Activated CD4-positive, alpha-beta T cell treated with anti-CD3 and anti-CD28 coated beads for 36 hours (primary cell): ENCODE measurements at regions of chr16 and their contacts with region 1.

Region 1: GRCh38 chr16:2905431-2906387 is 6.0 kb upstream of the FLYWCH1 start:
- DNase-seq: peak; percentile 100
- ATAC-seq: peak; percentile 81
- H3K4me3 Mint-ChIP-seq: peak overlapping the region; percentile 94
- H3K27ac Mint-ChIP-seq: peak overlapping the region; percentile 8
- H3K4me1 Mint-ChIP-seq: peaks cover 19% of the 10 kb centered on the region
- H3K27me3 Mint-ChIP-seq: no peaks in the 10 kb centered on the region

Region 2: DNA sequence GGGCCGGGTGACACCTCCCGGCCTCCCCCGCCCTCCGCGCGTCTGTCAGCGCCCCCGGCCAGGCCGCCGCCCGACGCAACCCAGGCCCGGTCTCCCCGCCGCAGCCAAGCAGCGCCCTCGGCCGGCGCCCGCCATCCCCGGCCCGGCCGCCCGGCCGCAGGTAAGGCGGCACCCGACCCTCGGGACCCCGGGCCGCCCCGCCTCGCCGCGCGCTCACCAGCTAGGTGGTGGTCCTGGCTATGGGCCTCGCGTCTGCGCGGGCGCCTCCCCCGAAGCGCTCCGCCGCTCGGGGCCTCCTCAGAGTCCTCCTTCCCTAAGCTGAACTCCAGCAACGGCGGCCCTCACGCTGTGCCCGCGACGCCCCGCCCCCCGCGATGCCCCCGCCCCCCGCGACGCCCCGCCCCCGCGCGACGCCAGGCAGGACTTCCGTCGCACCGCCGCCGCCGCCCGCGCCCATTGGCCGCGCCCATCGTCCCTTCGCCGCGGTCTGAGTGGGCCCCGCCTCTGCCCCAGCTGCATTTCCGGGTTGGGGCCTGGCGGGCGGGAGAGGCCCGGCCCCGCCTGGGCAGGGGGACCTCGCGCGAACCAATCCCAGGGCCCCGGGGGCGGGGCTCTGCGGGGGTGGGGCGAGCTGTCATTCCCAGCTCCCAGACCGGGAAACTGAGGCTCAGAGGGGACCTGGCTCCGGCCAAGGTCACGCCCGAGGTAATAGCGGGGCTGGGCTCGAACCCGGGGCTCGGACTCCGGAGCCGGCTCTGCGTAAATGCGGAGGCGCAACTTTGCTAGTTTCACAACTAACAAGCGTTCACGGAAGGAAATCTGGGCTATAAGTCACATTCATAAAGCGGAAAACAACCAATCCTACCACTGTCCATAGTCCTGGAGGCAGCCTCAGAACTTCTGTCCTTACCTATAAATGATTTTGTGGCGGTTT is 232.4 kb before region 1 on chr16:
- CTCF ChIA-PET with region 1: no interaction called
- POLR2A ChIA-PET with region 1: no interaction called
- intact Hi-C with region 1: loop called in 1 of 2 experiments (anchors 1 kb)
- DNase-seq: peak; percentile 98
- ATAC-seq: peak; percentile 97
- H3K4me3 Mint-ChIP-seq: peak overlapping the region; percentile 73
- H3K27ac Mint-ChIP-seq: peak overlapping the region; percentile 47
- H3K4me1 Mint-ChIP-seq: peaks cover 28% of the 10 kb centered on the region
- H3K27me3 Mint-ChIP-seq: no peaks in the 10 kb centered on the region

Region 3: GRCh38 chr16:2838928-2839327 is 66.8 kb before region 1 on chr16:
- CTCF ChIA-PET with region 1: interaction called, 4 read pairs
- POLR2A ChIA-PET with region 1: no interaction called
- intact Hi-C with region 1: loop called in 1 of 2 experiments (anchors 2 kb)
- DNase-seq: peak; percentile 77
- ATAC-seq: peak; percentile 67
- H3K4me3 Mint-ChIP-seq: no peak overlapping the region
- H3K27ac Mint-ChIP-seq: no peak overlapping the region
- H3K4me1 Mint-ChIP-seq: peaks cover 31% of the 10 kb centered on the region
- H3K27me3 Mint-ChIP-seq: peaks cover 3% of the 10 kb centered on the region

Region 4: DNA sequence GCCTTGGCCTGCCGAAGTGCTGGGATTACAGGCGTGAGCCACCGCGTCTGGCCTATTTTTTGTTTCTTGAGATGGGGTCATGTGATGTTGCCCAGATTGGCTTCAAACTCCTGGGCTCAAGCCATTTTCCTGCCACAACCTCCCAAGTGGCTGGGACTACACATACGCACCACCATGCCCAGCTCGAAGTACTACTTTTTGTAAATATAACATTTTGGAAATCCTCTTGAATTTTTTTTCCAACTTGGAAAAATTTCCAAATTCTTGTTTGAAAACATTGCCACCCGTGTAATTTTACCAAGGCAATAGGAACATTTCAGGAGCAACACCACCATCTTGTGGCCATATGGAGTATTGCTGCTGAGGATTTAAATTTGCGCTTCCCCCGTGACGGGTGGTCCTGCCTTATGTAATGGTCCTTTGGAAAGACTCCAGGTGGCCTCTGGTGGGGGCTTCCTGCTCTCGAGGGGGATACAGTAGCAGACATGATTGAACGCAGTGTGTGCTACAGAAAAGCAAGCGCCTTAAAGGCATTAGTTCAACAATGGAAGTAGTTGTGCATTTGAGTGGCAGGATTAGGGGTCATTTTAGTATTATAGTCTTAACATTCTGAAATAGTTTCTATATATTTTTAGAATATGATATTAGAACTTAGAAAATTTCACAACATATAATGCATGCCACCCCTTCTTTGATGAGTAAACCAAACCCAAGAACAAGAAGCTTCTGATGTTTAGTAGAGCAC is 14.0 kb after region 1 on chr16:
- CTCF ChIA-PET with region 1: interaction called, 8 read pairs
- POLR2A ChIA-PET with region 1: no interaction called
- intact Hi-C with region 1: loop called (anchors 1 kb)
- DNase-seq: peak; percentile 72
- ATAC-seq: peak; percentile 60
- H3K4me3 Mint-ChIP-seq: no peak overlapping the region
- H3K27ac Mint-ChIP-seq: no peak overlapping the region
- H3K4me1 Mint-ChIP-seq: peaks cover 18% of the 10 kb centered on the region
- H3K27me3 Mint-ChIP-seq: no peaks in the 10 kb centered on the region

Region 5: DNA sequence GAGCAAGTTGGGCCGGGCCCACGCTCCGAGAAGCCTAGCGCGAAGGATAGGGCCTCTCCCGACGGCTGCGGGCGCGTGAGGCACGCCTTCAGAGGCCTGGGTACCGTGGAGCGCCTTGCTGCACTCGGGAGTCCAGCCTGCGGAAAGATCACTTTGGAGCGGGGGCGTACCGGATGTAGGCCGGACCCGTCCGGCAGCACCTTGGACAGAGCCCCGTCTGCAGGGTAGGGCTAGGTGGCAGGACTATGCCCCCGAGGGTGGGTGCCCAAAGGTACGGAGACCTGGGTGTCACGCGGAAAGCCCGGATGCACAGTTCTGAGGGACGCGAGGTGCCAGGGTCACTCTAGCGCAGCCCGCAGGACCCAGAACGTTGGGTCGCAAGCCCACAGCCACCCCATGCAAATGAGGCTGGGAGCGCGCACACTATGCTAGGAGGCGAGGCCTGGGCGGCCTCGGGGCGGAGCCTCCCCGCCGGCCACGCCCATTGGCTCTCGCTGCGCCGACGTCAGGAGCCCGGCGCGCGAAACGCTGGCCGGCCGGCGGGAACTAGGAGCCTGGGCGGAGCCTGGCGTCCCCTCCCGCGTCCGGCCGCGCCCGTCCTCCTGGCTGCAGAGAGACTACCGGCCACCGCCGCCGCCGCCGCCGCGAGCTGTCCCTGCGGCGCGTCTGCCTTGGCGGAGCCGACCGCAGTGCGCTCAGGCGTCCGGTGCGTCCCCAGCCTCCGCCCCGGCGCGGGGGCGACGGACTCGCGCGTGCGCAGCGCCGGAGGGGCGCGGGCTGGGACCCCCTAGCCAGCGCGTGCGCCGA is 63.2 kb after region 1 on chr16 and contains the start of gene PAQR4:
- CTCF ChIA-PET with region 1: interaction called, 4 read pairs
- POLR2A ChIA-PET with region 1: no interaction called
- intact Hi-C with region 1: loop called in 1 of 2 experiments (anchors 1 kb)
- DNase-seq: peak; percentile 90
- ATAC-seq: peak; percentile 75
- H3K4me3 Mint-ChIP-seq: peak within 1 kb of the TSS; percentile 72
- H3K27ac Mint-ChIP-seq: peak within 1 kb of the TSS; percentile 25
- H3K4me1 Mint-ChIP-seq: peaks cover 31% of the 10 kb centered on the region
- H3K27me3 Mint-ChIP-seq: peaks cover 21% of the 10 kb centered on the region
- total RNA-seq, gene PAQR4: 28.7 to 31.2 TPM

Region 6: DNA sequence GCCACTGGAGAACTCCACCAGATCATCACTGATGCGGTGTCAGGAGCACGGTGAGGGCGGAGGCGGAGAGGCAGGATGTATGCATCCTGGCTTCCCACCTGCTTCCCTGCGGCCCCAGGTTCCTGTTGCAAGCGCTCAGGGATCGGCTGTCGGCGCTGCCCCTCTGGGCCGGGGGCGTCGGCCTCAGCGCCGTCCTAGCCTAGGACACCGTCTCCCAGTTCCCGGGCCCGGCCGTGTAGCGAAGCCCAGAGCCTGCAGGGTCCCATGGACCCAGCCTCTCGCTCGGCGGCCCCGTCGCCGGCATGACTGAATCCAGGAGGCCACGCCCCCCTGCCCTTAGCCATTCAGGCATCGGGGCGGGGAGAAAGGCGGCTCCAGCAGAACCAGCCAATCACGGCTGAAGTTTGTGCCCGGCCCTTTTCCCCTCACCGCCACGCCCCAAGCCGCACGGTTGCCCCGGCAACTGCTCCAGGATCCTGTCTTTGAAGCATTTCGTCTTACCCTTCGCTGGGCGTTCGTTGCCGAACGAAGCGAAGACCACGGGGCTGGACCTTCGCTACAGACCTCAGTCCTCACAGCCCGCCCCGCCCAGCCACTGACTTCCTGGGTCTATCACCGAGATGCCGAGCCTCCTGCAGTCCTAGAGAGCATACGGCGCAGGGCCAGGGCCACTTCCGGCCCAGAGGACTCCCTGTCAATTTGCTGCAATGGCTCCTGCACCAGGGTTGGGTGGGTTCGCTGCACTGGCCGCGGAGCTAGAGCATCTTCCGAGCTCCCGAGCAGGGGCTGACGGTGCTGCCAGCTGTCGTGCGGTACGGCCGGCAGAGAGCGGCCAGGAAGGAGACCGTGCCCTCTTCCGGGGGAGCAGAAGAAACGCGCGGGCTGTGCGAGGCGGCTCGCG is 218.5 kb after region 1 on chr16:
- CTCF ChIA-PET with region 1: no interaction called
- POLR2A ChIA-PET with region 1: no interaction called
- intact Hi-C with region 1: loop called in 1 of 2 experiments (anchors 1 kb)
- DNase-seq: peak; percentile 99
- ATAC-seq: peak; percentile 92
- H3K4me3 Mint-ChIP-seq: peak overlapping the region; percentile 90
- H3K27ac Mint-ChIP-seq: peak overlapping the region; percentile 90
- H3K4me1 Mint-ChIP-seq: peaks cover 30% of the 10 kb centered on the region
- H3K27me3 Mint-ChIP-seq: no peaks in the 10 kb centered on the region